ENCODE measurements at regions of chr9 and their contacts with region 1.

Region 1: GRCh38 chr9:79571309-79572031 is at the start of gene TLE4:
- DNase-seq: peak; percentile 100
- H3K4me3 ChIP-seq: peak within 1 kb of the TSS; percentile 83
- H3K27ac ChIP-seq: peak within 1 kb of the TSS; percentile 96
- H3K4me1 ChIP-seq: peaks cover 29% of the 10 kb centered on the region
- CTCF ChIP-seq: no peak
- total RNA-seq, gene TLE4: 32.8 and 36.7 TPM in 2 replicates

Region 2: DNA sequence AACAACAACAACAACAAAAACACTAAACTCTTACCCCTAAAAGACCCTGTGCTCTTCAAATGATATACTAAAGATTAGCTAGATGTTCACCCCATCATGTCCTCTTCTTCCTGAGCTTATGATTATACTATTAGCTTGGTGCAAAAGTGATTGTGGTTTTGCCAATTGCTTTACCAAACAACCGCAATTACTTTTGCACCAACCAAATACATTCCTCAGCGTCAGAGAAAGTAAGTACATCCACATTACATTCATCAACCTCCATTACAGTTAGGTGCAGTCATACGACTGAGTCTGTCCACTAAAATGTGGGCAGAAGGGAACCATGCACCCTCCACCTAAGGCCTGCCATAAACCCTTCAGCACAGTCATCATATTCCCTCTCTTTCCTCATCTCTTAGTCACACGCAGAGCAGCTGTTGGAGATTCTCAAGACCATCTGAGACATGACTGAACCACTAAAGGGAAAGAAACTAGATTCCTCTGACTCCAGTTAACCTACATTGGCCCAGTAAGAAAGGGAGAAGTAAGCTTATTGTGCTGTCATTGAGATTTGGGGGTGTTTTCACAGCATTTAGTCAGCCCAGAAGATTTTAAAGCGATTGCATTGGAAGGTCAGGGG is 181.3 kb before region 1 on chr9:
- CTCF ChIA-PET with region 1: no interaction called
- POLR2A ChIA-PET with region 1: no interaction called
- intact Hi-C with region 1: no loop called
- DNase-seq: no peak
- H3K4me3 ChIP-seq: no peak overlapping the region
- H3K27ac ChIP-seq: no peak overlapping the region
- H3K4me1 ChIP-seq: no peaks in the 10 kb centered on the region
- CTCF ChIP-seq: no peak

Region 3: DNA sequence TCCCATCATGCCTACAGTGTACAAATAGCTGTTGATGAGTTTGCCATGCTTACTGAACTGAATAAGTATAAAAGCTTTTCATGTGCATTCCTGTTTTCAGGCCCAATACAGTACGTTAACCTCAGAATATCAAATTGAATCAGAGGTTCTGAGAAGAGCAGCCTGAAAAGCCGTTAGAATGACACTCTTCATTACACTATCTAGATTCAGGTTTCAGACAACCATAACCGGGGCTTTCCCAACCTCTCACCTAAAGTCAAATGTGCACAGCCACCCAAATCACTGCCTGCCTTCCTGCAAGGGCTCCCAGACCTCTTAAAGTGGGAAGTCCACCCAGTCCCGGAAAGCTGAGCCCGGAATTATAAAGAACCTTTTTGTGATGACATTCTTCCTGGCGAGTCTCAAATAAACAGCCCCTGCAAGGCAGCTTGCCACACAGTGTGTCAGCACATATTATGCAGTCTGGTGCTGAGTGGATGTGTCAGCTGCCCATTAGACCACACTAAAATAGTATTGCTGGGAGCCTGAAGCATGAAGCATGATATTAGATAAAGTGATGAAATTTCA is 246.1 kb after region 1 on chr9:
- CTCF ChIA-PET with region 1: no interaction called
- POLR2A ChIA-PET with region 1: no interaction called
- intact Hi-C with region 1: loop called (anchors 10 kb)
- DNase-seq: no peak
- H3K4me3 ChIP-seq: no peak overlapping the region
- H3K27ac ChIP-seq: no peak overlapping the region
- H3K4me1 ChIP-seq: peaks cover 2% of the 10 kb centered on the region
- CTCF ChIP-seq: no peak

Region 4: DNA sequence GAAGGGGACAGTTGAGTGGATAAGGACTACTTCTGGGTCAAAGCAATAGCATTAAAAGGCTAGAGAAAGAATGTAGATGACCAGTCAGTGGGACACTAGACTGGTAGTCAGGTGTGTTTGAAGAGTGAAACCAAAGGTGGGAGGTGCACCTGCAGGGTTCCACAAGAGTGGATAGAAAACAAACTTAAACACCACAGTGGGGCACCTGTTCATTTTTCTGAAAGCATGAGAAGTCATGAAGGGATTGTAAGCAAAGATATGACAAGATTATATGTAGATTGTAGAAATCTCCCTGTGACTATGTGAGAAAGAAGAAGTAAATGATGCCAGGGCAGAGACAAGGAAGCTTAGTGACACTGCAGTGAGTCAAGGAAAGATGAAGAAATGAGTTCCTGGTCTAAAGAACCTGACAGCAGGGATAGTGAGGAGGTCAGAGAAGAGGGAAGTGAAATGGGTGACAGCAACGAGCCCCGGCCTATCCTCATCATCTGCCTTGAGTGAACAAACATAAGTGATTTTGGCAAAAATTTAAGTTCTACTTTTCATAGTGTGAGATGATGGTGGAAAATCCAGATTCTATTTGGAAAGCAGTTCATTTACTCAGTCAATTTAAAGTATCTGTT is 297.2 kb after region 1 on chr9:
- CTCF ChIA-PET with region 1: no interaction called
- POLR2A ChIA-PET with region 1: no interaction called
- intact Hi-C with region 1: loop called (anchors 2 kb)
- DNase-seq: peak; percentile 71
- H3K4me3 ChIP-seq: no peak overlapping the region
- H3K27ac ChIP-seq: peak overlapping the region; percentile 76
- H3K4me1 ChIP-seq: peaks cover 42% of the 10 kb centered on the region
- CTCF ChIP-seq: no peak

Measured in OCI-LY7 (cell line).